Ascending aorta (tissue), 2 donors: ENCODE measurements at regions of chrX and their contacts with region 1.

Region 1: DNA sequence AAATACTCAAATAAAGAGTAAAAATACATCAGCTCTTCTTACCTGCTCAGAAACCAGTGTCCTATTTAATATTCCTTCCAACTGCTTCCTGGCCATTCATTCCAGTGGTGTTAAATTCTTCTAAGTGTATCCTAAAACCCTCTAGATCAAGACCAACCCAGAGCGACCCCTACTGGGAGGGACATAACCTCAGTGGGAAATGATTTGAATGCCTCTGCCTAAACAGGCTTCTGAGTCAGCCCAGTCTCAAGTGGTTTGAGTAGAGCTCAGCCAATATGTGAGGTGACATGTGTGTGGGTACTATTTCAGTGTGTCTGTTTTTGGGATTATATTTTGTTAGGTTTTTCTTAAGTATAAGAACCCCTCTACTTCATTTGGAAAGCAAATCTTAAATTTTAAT is 133.6 kb upstream of the ARHGEF9 start:
- DNase-seq: peak in 1 of 2 donors; percentile 66
- H3K4me3 ChIP-seq: no peak overlapping the region
- H3K27ac ChIP-seq: peak overlapping the region in 1 of 2 donors; percentile 82
- H3K4me1 ChIP-seq: peaks cover 13 to 18% of the 10 kb centered on the region in 2 donors
- H3K27me3 ChIP-seq: no peaks in the 10 kb centered on the region
- CTCF ChIP-seq: peak in 2 of 3 experiments; percentile 13 to 45

Region 2: DNA sequence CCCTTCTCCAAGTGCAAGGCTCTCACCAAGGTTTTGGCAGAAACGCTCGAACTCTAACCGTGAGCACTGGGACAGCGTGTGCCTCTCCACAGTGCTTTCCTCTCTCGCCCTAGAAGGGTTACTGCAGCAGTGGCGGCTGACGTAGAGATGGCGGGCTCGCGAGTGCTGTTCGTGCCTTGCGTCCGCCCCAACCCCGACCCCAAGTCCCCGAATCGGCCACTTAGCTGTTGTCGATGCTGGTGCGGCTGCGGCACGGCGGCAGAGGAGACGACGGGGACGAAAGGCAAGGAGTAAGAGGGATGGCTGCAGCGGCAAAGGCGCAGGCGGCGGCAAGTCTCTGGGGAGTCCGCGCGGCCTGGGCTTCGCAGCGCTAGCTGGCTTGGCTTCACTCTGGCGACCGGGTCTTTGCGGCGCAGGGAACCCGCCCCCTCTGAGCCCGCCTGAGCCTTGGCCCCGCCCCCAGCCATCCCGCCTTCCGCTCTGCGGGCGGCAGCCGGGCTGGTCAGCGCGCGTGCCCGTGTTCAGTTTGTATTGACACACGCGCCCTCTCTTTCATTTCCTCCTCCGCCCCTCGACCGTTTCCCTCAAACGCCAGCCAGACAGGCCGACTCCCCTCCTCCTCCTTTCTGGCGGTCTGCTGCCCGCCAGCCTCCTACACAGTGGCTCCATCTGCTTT is 567.5 kb before region 1 on chrX and contains the start of gene SPIN4:
- intact Hi-C with region 1: loop called (anchors 5 kb)
- DNase-seq: peak; percentile 39 to 91
- H3K4me3 ChIP-seq: peak within 1 kb of the TSS; percentile 66 to 68
- H3K27ac ChIP-seq: peak within 1 kb of the TSS; percentile 70 to 72
- H3K4me1 ChIP-seq: no peaks in the 10 kb centered on the region
- H3K27me3 ChIP-seq: no peaks in the 10 kb centered on the region
- CTCF ChIP-seq: no peak
- total RNA-seq, gene SPIN4: 9.2 TPM

Region 3: GRCh38 chrX:63657821-63658220 is 260.8 kb before region 1 on chrX:
- intact Hi-C with region 1: loop called (anchors 10 kb)
- DNase-seq: peak; percentile 68 to 89
- H3K4me3 ChIP-seq: no peak overlapping the region
- H3K27ac ChIP-seq: peak overlapping the region; percentile 76 to 77
- H3K4me1 ChIP-seq: peaks cover 4 to 6% of the 10 kb centered on the region in 2 donors
- H3K27me3 ChIP-seq: no peaks in the 10 kb centered on the region
- CTCF ChIP-seq: no peak

Region 4: GRCh38 chrX:63754860-63755582 is 163.6 kb before region 1 on chrX:
- intact Hi-C with region 1: loop called (anchors 5 kb)
- DNase-seq: peak; percentile 89 to 96
- H3K4me3 ChIP-seq: peak overlapping the region; percentile 61 to 71
- H3K27ac ChIP-seq: peak overlapping the region; percentile 89 to 91
- H3K4me1 ChIP-seq: no peaks in the 10 kb centered on the region
- H3K27me3 ChIP-seq: no peaks in the 10 kb centered on the region
- CTCF ChIP-seq: no peak

Region 5: GRCh38 chrX:63963095-63963784 is 44.6 kb after region 1 on chrX:
- intact Hi-C with region 1: no loop called
- DNase-seq: no peak
- H3K4me3 ChIP-seq: no peak overlapping the region
- H3K27ac ChIP-seq: no peak overlapping the region
- H3K4me1 ChIP-seq: no peaks in the 10 kb centered on the region
- H3K27me3 ChIP-seq: no peaks in the 10 kb centered on the region
- CTCF ChIP-seq: no peak